Activated CD4-positive, alpha-beta T cell treated with anti-CD3 and anti-CD28 coated beads for 36 hours (primary cell): ENCODE measurements at regions of chr6 and their contacts with region 1.

Region 1: GRCh38 chr6:111534231-111534751 is 51.3 kb upstream of the REV3L start:
- DNase-seq: no peak
- ATAC-seq: no peak
- H3K4me3 Mint-ChIP-seq: no peak overlapping the region
- H3K27ac Mint-ChIP-seq: no peak overlapping the region
- H3K4me1 Mint-ChIP-seq: peaks cover 39% of the 10 kb centered on the region
- H3K27me3 Mint-ChIP-seq: no peaks in the 10 kb centered on the region

Region 2: GRCh38 chr6:111565326-111566221 is 31.3 kb after region 1 on chr6:
- CTCF ChIA-PET with region 1: interaction called, 3 read pairs
- POLR2A ChIA-PET with region 1: no interaction called
- intact Hi-C with region 1: loop called in 1 of 2 experiments (anchors 1 kb)
- DNase-seq: peak; percentile 57
- ATAC-seq: peak; percentile 65
- H3K4me3 Mint-ChIP-seq: no peak overlapping the region
- H3K27ac Mint-ChIP-seq: peak overlapping the region; percentile 88
- H3K4me1 Mint-ChIP-seq: peaks cover 53% of the 10 kb centered on the region
- H3K27me3 Mint-ChIP-seq: no peaks in the 10 kb centered on the region

Region 3: DNA sequence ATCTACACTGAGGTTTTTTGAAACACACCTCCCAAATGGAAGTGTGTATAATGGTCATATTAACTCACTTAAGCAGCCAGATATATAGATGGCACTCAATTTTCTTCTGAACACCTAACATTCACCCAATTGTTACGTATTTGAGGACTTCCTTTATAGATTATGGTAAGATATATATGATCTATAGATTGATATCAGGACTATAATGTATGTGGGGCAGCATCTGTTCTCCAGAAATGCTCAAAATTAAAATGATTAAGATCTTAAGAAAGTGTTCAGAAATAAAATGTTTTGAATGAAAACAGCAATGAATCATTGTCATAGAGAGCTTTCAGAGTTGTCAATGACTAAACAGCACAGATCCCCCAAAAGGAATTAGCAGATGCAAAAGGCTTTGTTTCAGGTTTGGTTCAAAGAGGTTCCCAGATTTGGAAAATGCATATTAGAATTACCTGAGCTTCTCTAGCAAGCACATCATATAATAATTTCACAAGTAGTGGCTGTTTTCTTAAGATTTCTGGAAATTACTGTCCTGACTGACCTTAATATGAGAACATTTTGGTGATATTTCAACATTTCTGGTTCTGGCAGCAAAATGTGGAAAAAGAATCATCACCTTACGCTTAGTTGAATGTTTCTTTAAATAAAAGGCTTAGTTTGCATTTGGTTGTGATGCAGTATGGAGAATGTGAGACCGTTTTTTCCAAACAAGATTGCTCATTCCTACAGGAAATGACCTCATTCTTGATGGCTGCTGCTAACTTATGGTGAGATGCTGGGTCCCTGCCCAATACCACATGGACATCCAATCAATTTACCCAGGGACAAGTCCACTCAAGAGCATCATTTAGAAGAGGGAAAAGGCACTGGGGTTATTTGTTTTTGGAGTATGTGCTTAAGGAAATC is 39.9 kb after region 1 on chr6:
- CTCF ChIA-PET with region 1: no interaction called
- POLR2A ChIA-PET with region 1: no interaction called
- intact Hi-C with region 1: loop called in 1 of 2 experiments (anchors 1 kb)
- DNase-seq: peak; percentile 36
- ATAC-seq: peak; percentile 77
- H3K4me3 Mint-ChIP-seq: no peak overlapping the region
- H3K27ac Mint-ChIP-seq: peak overlapping the region; percentile 72
- H3K4me1 Mint-ChIP-seq: peaks cover 24% of the 10 kb centered on the region
- H3K27me3 Mint-ChIP-seq: no peaks in the 10 kb centered on the region

Region 4: DNA sequence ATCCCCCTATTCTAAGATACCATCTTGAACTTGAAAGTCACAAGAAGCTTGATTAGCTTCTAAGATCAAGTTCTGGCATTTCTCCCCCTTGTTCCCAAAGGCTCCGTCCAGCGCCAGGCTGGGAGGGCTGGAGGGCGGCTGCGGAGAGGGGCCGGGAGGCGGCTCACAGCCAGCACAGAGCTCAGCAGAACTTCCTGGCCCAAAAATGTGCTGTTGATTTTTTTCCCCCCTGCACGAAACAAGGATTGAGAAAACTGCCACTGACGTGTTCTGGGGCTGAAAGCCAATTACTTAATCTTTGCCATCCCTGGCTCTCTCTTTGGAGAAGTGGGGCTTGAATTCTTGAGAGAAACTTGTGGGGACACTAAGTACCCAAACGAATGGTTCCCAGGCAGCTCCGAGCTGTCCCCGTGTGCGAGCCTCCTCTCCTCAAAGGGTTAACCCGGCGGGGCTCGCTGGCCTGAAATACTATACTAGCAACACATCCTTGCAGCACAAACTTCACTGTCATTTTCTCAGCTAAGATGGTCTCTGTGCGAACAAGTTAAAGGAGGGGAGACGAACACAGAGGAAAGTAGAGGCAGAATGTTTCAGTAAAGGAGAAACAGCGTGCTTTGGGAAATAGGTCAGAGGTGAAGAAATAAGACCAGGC is 70.9 kb after region 1 on chr6:
- CTCF ChIA-PET with region 1: no interaction called
- POLR2A ChIA-PET with region 1: interaction called, 3 read pairs
- intact Hi-C with region 1: loop called in 1 of 2 experiments (anchors 1 kb)
- DNase-seq: peak; percentile 52
- ATAC-seq: peak; percentile 45
- H3K4me3 Mint-ChIP-seq: peak overlapping the region; percentile 80
- H3K27ac Mint-ChIP-seq: peak overlapping the region; percentile 99
- H3K4me1 Mint-ChIP-seq: peaks cover 39% of the 10 kb centered on the region
- H3K27me3 Mint-ChIP-seq: no peaks in the 10 kb centered on the region

Region 5: DNA sequence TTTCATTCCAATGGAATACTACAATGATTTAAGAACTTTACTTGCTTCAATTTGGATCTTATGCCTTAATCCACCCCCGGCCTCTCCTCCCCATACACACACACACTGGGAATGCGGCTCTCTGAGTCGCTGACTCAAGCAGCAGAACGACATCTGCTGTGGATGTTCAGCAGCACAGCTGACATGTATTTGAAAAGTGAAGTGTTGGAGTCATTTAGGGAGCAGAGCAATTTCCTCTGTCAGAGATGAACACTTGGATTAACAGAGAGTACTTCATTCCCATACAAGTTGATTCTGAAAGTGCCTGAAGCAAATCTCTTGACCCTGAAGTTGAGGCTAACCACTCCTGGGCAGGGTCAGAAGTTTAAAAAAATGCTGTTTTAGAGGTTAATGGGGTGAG is 747.9 kb after region 1 on chr6:
- CTCF ChIA-PET with region 1: no interaction called
- POLR2A ChIA-PET with region 1: no interaction called
- intact Hi-C with region 1: loop called in 1 of 2 experiments (anchors 10 kb)
- DNase-seq: no peak
- ATAC-seq: no peak
- H3K4me3 Mint-ChIP-seq: no peak overlapping the region
- H3K27ac Mint-ChIP-seq: no peak overlapping the region
- H3K4me1 Mint-ChIP-seq: peaks cover 16% of the 10 kb centered on the region
- H3K27me3 Mint-ChIP-seq: peaks cover 33% of the 10 kb centered on the region